Dorsolateral prefrontal cortex (tissue), 120 donors: ENCODE measurements at regions of chr1 and their contacts with region 1.

Region 1: DNA sequence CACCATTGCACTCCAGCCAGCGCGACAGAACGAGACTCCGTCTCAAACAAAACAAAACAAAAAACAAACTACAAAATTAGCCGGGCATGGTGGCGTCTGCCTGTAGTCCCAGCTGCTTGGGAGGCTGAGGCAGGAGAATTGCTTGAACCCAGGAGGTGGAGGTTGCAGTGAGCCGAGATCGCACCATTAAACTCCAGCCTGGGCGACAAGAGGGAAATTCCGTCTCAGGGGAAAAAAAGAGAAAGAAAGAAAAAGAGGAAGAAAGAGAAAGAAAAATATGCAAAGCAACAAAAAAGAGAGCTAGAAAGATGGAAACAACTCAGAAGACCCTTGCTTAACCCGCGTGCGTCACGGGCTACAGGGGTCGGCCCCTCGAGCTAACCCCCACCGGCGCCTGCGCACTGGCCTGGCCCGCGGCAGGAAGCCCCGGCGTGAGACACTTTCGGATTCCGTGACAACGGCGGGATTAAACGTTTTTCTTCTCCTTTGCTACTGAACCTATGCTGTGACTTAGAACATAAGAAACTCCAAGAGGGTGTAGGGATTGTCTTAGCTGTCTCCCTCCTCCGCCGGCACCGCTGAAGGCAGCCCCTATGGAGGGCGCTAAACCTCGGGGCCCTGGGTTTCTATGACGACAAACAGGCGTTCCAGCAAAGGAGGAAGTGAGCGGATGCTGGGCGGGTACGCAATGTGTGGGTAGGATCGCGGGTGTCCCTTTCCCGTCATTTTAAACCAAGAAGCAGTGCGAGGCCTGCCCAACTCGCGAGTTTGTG is at the start of gene AXDND1:
- DNase-seq: peak; percentile 45 to 86 (median 78)
- H3K4me3 ChIP-seq: peak within 1 kb of the TSS; percentile 63 to 95 (median 76)
- H3K27ac ChIP-seq: peak within 1 kb of the TSS in 58 of 59 donors; percentile 47 to 97 (median 88)
- H3K27me3 ChIP-seq: no peaks in the 10 kb centered on the region
- CTCF ChIP-seq: peak in 40 of 56 donors; percentile 15 to 67 (median 44)
- total RNA-seq, gene AXDND1: 0.25 to 3.1 (median 0.96) TPM in 98 of 120 experiments, not detected in the others

Region 2: GRCh38 chr1:178774263-178774662 is 591.2 kb before region 1 on chr1:
- intact Hi-C with region 1: loop called (anchors 5 to 10 kb)
- DNase-seq: no peak
- H3K4me3 ChIP-seq: no peak overlapping the region
- H3K27ac ChIP-seq: no peak overlapping the region
- H3K27me3 ChIP-seq: no peaks in the 10 kb centered on the region
- CTCF ChIP-seq: peak; percentile 31 to 77 (median 55)

Region 3: DNA sequence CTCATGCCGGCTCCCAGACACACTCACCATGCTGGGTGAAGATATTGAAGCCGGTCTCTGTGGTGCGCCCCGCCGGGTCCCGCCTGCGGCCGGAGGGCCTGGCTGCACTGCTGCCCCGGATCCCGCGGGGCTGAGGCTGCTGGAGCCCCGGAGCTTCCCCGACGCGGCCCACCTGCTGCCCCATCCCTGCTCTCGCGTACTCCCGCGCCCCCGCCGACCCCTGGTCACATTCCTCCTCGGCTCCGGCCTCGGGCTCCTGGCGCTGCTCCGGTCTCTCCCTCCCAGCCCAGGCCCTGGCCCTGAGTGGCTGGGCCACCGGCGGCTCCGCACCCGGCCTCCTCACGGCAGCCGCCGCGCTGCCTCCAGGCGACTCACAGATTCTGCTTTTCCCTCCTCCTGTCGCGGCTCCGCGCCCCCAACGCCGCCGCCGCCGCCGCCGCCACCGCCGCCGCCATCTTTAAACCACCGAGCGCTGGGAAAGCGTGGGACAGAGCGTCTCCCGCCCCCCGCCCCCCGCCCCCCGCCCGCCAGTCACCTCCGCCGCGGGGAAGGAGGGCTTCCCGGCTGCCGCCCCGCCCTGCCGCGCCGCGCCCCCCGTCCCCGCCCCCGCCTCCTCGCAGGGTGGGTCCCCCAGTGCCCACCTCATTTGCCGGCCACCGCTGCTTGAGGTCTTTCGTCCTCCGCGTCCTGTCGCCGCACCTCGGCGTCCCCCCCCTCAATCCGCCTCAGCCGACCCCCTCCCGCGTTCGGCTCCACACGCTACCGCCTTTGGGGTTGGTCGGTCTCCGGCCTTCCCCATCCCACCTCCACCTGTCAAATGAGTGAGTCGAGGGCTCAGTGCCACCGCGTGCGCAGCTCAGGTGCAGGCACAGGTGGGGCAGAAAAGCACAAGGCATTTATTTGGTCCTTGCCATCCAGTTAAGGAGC is 136.0 kb before region 1 on chr1 and contains the start of gene ABL2:
- intact Hi-C with region 1: no loop called
- DNase-seq: peak in 7 of 10 donors; percentile 16 to 64 (median 44)
- H3K4me3 ChIP-seq: peak within 1 kb of the TSS; percentile 67 to 98 (median 93)
- H3K27ac ChIP-seq: peak within 1 kb of the TSS in 58 of 59 donors; percentile 45 to 96 (median 87)
- H3K27me3 ChIP-seq: no peaks in the 10 kb centered on the region
- CTCF ChIP-seq: peak in 4 of 56 donors; percentile 6 to 22 (median 16)
- total RNA-seq, gene ABL2: 29.3 to 50.9 (median 40.0) TPM

Region 4: GRCh38 chr1:179241523-179242097 is 123.9 kb before region 1 on chr1:
- intact Hi-C with region 1: loop called in 1 of 2 experiments (anchors 10 kb)
- DNase-seq: no peak
- H3K4me3 ChIP-seq: no peak overlapping the region
- H3K27ac ChIP-seq: peak overlapping the region in 9 of 59 donors; percentile 11 to 63 (median 37)
- H3K27me3 ChIP-seq: no peaks in the 10 kb centered on the region
- CTCF ChIP-seq: no peak

Region 5: DNA sequence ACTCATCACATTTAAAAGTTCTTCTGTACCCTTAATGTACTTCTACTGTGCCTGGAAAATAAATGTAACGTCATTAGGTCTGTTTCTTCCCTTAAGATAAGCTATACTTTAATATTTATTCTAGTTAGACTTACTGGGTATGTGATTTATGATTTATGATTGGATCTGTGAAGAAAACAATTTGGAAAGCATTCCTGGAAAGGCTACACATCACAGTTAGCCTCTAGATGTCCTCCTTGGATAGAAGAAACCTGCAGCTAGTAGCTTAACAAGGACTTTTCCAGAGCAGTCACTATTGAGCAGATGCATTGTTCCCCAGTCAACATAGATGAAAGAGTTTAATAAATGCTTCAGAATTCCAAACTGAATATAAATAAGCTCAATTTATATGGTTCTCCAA is 113.8 kb before region 1 on chr1:
- intact Hi-C with region 1: loop called (anchors 5 to 10 kb)
- DNase-seq: no peak
- H3K4me3 ChIP-seq: no peak overlapping the region
- H3K27ac ChIP-seq: no peak overlapping the region
- H3K27me3 ChIP-seq: no peaks in the 10 kb centered on the region
- CTCF ChIP-seq: peak in 50 of 56 donors; percentile 13 to 71 (median 42)

Region 6: DNA sequence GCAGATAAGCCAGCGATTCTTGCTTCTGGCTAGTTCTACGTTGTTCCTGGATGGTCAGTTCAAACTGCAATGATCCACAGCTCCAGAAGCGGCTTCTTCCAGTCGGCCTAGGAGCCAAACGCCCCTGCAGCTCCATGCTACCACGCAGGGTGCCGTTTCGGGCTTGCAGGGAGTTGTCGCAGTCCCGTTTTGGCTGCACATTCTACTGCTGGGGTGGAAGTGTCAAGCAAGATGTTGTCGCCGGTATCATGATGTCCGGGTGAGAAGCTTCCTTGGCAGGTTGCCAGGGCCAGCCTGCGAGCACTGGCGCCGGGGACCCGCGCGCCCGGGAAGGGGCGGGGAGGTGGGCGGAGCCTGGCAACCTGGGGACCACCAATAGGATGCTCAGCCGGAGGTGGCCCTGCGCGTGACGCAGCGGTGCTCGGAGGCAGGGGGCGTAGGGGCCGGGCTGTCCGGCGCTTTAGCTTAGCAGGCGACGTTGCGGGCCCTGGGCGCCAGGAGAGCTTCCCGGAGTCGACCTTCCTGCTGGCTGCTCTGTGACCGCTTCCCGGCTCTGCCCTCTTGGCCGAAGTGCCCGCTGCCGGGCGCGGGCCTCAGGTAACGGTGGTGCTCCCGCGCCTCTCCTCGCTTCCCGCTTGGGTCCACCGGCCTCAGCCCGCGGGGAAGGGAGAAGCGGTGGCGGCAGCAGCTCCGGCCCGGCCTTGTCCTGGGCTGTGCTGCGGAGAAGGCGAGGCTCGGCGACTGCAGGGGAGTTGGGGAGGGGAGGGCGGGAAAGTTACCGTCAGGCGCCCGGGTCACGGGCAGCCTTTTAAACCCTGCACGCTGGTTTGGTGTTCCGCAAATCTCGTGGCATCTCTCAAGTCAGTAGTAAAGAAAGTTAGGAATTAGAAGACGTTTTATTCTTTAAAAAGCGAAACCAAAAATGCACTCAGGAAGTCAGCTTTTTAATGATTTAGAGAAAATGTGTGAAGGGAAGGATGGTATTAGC is 71.9 kb before region 1 on chr1 and contains the start of gene SOAT1:
- intact Hi-C with region 1: loop called (anchors 5 to 10 kb)
- DNase-seq: peak; percentile 88 to 98 (median 95)
- H3K4me3 ChIP-seq: peak within 1 kb of the TSS; percentile 64 to 96 (median 85)
- H3K27ac ChIP-seq: peak within 1 kb of the TSS; percentile 54 to 94 (median 85)
- H3K27me3 ChIP-seq: no peaks in the 10 kb centered on the region
- CTCF ChIP-seq: peak in 48 of 56 donors; percentile 3 to 66 (median 40)
- total RNA-seq, gene SOAT1: 10.1 to 31.3 (median 18.6) TPM

Region 7: GRCh38 chr1:179554427-179554826 is 188.9 kb after region 1 on chr1:
- intact Hi-C with region 1: no loop called
- DNase-seq: no peak
- H3K4me3 ChIP-seq: no peak overlapping the region
- H3K27ac ChIP-seq: no peak overlapping the region
- H3K27me3 ChIP-seq: peaks cover 0 to under 1% (median 0%) of the 10 kb centered on the region in 45 donors
- CTCF ChIP-seq: no peak